ENCODE measurements at regions of chr7 and their contacts with region 1.

Region 1: GRCh38 chr7:18357691-18358090 is 137.9 kb upstream of the HDAC9 start:
- DNase-seq: no peak
- ATAC-seq: peak; percentile 40
- H3K4me3 Mint-ChIP-seq: no peak overlapping the region
- H3K27ac Mint-ChIP-seq: no peak overlapping the region
- H3K4me1 Mint-ChIP-seq: peaks cover 29% of the 10 kb centered on the region
- H3K27me3 Mint-ChIP-seq: no peaks in the 10 kb centered on the region
- CTCF ChIP-seq: no peak

Region 2: GRCh38 chr7:17625043-17625442 is 732.6 kb before region 1 on chr7:
- CTCF ChIA-PET with region 1: no interaction called
- POLR2A ChIA-PET with region 1: no interaction called
- intact Hi-C with region 1: no loop called
- DNase-seq: no peak
- ATAC-seq: no peak
- H3K4me3 Mint-ChIP-seq: no peak overlapping the region
- H3K27ac Mint-ChIP-seq: no peak overlapping the region
- H3K4me1 Mint-ChIP-seq: no peaks in the 10 kb centered on the region
- H3K27me3 Mint-ChIP-seq: no peaks in the 10 kb centered on the region
- CTCF ChIP-seq: no peak

Region 3: DNA sequence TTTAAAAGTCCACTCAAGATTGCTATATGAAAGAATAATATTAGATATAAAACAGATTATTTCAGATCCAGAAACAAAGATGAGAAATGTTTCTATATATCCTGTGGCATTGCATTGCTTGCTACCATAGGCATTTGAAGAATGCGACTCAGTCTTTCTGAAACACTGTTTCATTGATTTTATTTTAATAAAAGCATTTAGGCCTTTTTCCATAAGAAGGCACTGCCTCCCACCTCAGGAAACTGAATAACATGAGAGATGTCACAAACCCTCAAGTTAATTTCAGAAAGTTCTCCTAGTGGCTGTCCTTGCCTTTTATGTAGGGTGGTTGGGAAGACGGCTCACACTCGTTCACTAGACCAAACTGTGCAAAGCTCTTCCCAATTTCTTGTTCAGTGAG is 353.3 kb before region 1 on chr7:
- CTCF ChIA-PET with region 1: no interaction called
- POLR2A ChIA-PET with region 1: no interaction called
- intact Hi-C with region 1: no loop called
- DNase-seq: no peak
- ATAC-seq: no peak
- H3K4me3 Mint-ChIP-seq: no peak overlapping the region
- H3K27ac Mint-ChIP-seq: no peak overlapping the region
- H3K4me1 Mint-ChIP-seq: no peaks in the 10 kb centered on the region
- H3K27me3 Mint-ChIP-seq: no peaks in the 10 kb centered on the region
- CTCF ChIP-seq: no peak

Region 4: DNA sequence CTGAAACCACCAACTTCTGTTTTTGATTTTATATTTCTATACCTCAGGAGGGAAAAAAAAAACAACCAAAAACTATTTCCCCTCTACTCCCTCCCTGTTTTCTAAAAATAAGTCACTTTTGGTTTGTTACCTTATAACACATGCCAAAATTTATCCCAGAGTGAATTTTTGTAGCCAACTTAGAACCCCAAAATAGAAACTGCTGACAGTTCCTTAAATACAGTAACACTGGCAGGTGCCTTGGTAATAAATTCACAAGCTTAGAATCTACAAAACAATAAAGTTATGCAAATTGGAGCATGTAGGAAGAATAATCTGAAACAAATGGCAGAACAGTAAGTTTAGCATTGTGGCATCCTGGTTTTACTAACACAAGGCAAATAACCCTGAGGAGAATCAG is 27.1 kb before region 1 on chr7:
- CTCF ChIA-PET with region 1: no interaction called
- POLR2A ChIA-PET with region 1: no interaction called
- intact Hi-C with region 1: no loop called
- DNase-seq: no peak
- ATAC-seq: peak; percentile 45
- H3K4me3 Mint-ChIP-seq: peak overlapping the region; percentile 66
- H3K27ac Mint-ChIP-seq: peak overlapping the region; percentile 89
- H3K4me1 Mint-ChIP-seq: peaks cover 60% of the 10 kb centered on the region
- H3K27me3 Mint-ChIP-seq: no peaks in the 10 kb centered on the region
- CTCF ChIP-seq: no peak

Region 5: DNA sequence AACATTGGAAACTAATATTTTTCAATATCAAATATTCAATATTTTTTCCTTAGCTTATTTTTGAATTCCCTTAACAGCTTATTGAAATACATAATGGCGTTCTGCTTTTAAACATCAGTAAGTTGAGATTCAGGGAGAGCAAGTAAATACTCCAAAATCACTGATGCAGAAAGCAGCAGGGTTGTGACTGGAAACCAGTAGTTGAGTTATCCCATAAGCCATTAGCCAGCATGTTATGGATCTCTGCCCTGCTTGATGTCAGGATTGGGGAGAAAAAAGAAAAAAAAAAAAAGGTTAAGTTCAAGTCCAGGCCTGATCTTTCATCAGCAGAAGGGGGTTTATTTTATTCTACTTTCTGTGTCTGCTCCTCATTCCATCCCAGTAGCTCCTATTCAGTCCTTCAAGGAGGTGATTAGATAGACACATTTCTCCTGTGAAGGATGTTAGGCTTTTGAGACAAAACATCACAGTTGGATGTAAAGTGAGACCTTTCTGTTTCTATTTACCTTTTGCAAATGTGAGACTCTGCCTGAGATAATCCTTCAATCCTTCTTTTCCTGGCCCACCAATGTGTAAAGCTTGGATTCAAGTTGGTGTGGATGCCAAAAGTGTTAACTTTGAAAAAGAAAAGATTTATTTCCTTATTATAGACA is 26.9 kb after region 1 on chr7:
- CTCF ChIA-PET with region 1: interaction called, 3 read pairs
- POLR2A ChIA-PET with region 1: no interaction called
- intact Hi-C with region 1: loop called (anchors 2 kb)
- DNase-seq: no peak
- ATAC-seq: no peak
- H3K4me3 Mint-ChIP-seq: no peak overlapping the region
- H3K27ac Mint-ChIP-seq: no peak overlapping the region
- H3K4me1 Mint-ChIP-seq: peaks cover 30% of the 10 kb centered on the region
- H3K27me3 Mint-ChIP-seq: no peaks in the 10 kb centered on the region
- CTCF ChIP-seq: no peak

Measured in activated B cell treated with CpG ODN at 0.5 μM for 24 hours (primary cell).